HCT116 (cell line): ENCODE measurements at regions of chr12 and their contacts with region 1.

Region 1: DNA sequence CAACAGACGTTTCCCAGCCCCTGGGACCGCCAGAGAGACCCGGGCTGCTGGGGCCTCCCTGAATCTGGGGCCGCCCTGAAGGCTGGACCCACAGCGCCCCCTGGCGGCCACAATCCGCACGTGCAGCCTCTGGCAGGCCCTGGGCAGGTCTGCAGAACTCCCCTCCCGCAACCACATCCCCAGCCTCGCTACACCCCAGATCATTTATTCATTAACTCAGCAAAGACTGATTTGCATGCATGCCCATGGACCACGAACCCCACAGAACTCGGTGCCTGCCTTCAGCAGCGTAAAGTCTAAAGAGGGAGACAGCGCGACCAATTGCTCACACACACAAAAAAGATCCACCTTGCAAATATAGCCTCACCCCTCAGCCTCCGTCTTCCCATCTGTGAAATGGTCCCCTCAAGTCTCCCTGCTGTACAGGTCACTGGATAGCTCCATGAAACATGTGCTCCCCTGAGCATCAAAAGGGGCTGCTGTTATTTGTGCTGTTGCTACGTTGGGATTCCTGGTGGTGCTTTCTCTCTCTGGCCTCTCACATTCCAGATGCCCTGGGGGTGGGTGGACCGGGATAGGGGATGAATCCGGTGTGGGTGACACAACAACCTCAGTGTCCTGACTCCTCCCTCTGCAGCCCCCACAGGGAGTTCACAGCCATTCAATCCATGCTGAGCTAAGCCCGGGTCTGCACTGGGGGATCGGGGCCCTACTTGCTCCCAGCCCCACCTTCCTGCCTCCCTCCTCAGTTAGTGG is 96.4 kb downstream of the SCARB1 start:
- DNase-seq: no peak
- ATAC-seq: peak; percentile 87
- H3K4me3 ChIP-seq: no peak overlapping the region
- H3K27ac ChIP-seq: no peak overlapping the region
- H3K4me1 ChIP-seq: peaks cover 0 to 8% of the 10 kb centered on the region in 2 experiments; a peak in 1 of 4 replicates
- H3K27me3 ChIP-seq: no peaks in the 10 kb centered on the region
- CTCF ChIP-seq: peak; percentile 81 to 98 (median 90)
- POLR2A ChIP-seq: no peak
- RAD21 ChIP-seq: peak; percentile 98

Region 2: DNA sequence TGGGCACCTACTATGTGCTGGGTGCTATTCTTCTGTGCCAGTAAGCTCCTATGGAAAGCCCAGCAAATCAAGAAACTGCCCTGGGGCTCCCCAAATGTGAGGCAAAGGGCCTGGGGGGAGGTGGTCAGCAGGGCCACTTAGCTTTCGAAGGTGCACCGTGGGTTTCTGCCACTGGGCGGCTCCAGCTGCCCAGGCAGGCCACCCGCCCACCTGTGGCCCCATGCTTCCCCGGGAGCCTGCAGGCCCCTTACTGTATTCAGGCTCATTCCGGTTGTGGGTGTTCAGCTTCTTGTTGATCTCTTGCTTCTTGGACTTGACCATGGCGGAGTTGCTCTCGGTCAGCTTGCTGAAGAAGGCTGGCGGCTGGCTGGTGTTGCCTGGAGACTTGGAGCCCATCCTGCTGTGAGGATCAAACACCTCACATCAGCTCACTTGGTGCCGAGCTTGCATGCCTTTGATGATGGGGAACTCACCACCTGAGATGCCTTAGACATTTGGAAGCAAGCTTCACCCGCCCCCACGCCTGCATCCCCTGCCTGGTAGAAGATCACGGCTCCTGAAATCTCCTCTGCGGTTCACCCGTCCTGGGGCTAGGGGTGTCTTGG is 435.1 kb before region 1 on chr12:
- CTCF ChIA-PET with region 1: no interaction called
- POLR2A ChIA-PET with region 1: no interaction called
- RAD21 ChIA-PET with region 1: no interaction called
- intact Hi-C with region 1: loop called (anchors 5 kb)
- DNase-seq: no peak
- ATAC-seq: peak; percentile 72
- H3K4me3 ChIP-seq: no peak overlapping the region
- H3K27ac ChIP-seq: no peak overlapping the region
- H3K4me1 ChIP-seq: no peaks in the 10 kb centered on the region
- H3K27me3 ChIP-seq: no peaks in the 10 kb centered on the region
- CTCF ChIP-seq: peak in 2 of 3 experiments; percentile 47 to 54; a peak in 4 of 6 replicates
- POLR2A ChIP-seq: no peak
- RAD21 ChIP-seq: peak; percentile 58

Region 3: DNA sequence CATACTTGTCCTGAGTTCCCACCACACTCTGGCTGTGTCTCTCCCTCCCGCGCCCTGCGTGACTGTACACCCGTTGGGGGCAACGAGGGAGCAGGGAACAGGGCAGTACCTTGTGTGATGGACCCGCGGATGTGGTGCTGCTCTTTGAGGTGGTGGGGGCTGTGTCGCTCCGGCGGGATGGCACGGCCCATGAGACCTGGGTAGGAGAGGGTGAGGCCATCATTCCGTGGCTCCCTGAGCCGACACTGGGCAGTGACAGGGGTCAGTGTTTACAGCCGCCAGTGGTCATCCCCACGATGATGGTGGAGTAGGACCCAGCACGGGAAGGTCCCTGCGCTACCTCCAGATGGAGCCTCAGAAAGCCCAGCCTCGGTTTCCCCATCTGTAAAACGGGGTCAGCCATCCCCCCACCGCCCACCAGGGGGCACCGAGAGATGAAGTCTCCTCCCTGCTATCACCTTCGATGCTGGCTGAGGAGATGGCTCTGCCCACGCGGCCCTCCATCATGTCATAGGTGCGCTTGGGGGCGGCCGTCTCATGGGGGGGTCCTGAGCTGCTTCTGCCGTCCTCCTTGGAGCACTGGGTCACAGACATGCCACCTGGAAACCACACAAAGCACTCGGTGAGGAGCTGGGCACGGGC is 419.4 kb before region 1 on chr12:
- CTCF ChIA-PET with region 1: no interaction called
- POLR2A ChIA-PET with region 1: no interaction called
- RAD21 ChIA-PET with region 1: no interaction called
- intact Hi-C with region 1: loop called (anchors 2 kb)
- DNase-seq: no peak
- ATAC-seq: peak; percentile 62
- H3K4me3 ChIP-seq: no peak overlapping the region
- H3K27ac ChIP-seq: no peak overlapping the region
- H3K4me1 ChIP-seq: no peaks in the 10 kb centered on the region
- H3K27me3 ChIP-seq: no peaks in the 10 kb centered on the region
- CTCF ChIP-seq: peak; percentile 45 to 68 (median 59); a peak in 5 of 6 replicates
- POLR2A ChIP-seq: no peak
- RAD21 ChIP-seq: peak; percentile 65

Region 4: DNA sequence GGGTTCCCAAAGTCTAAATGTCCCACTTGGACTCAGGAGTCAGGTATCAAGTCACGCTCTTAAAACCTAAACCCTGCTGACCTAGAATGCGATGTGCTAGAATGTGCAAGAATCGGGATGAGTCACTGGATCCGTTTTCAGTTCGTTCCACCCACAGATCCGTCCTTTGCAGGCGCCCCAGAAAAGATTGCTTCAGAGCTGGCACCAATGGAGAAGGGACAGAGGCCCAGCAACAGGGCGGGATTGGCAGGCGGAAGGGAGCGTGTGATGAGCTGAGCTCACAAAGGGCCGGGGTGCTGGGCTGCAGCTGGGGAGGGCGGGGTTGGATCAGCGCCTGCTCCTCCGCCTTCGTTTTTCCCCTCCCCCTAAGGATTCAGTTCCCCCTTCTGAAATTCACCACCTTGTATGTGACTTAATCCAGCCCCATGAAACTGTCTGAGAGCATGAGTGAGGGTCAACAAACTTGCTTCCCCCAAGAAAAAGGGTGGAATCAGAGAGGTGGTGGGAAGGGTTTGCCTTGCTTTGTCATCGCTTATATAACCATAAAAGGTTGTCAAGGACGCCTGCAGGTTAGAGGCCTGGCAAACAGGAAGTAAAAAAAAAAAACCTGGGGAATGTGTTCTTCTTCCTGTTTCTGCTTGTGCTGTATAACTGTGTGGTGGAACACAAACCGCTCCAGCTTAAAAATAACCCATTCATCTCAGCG is 150.0 kb after region 1 on chr12:
- CTCF ChIA-PET with region 1: no interaction called
- POLR2A ChIA-PET with region 1: no interaction called
- RAD21 ChIA-PET with region 1: no interaction called
- intact Hi-C with region 1: no loop called
- DNase-seq: peak; percentile 99
- ATAC-seq: peak; percentile 75
- H3K4me3 ChIP-seq: peak overlapping the region; percentile 45 to 100
- H3K27ac ChIP-seq: peak overlapping the region; percentile 96
- H3K4me1 ChIP-seq: peaks cover 47 to 82% of the 10 kb centered on the region in 2 experiments
- H3K27me3 ChIP-seq: no peaks in the 10 kb centered on the region
- CTCF ChIP-seq: no peak
- POLR2A ChIP-seq: peak; percentile 52
- RAD21 ChIP-seq: no peak